Activated CD4-positive, alpha-beta T cell treated with anti-CD3 and anti-CD28 coated beads, Interleukin-2, amount 10 ng/mL, durations not matched to agents 24 days and 14 days (primary cell): ENCODE measurements at regions of chr13 and their contacts with region 1.

Region 1: DNA sequence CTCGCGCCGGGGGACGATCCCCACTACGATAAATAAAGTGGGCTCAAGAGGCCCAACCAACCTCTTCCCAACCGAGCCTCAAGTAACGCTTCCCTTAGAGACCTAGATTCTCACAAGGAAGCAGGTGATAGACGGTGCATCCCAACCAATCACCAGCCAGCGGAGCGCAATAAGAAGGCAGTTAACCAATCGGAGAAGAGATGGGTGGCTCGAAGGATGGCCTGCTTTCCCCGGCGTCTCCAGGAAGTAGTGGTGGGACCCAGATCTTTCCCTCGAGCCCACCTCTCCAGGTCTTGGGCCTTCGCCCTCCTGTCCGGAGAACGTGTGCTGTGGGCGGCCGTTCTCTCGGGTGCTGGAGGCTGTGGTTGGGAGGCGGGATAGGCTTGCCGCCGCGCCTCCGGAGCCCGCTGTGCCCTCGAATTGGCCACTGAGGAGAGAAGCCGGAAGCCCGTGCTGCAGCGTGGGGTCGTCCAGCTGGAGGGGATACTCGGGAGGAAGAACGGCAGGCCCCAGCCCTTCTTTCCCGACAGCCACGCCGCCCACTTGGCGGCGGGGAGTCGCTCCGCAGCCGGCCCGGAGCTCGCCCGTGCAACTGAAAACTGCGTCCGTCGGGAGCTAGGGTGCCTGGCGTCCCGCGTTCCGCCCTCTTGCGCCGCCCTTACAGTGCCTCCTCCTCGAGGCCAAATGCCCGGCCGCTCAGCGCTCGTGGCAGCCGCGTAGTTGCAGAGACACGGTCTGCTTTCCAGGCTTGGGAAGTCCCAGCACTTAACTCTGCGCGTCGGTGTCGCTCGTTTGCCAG is at the start of gene RNF6:
- DNase-seq: peak; percentile 95
- H3K4me3 Mint-ChIP-seq: peak within 1 kb of the TSS; percentile 97
- H3K27ac Mint-ChIP-seq: peak within 1 kb of the TSS; percentile 99
- H3K4me1 Mint-ChIP-seq: peaks cover 33% of the 10 kb centered on the region
- H3K27me3 Mint-ChIP-seq: peaks cover 2% of the 10 kb centered on the region
- total RNA-seq, gene RNF6: 45.8 and 53.4 TPM in 2 replicates

Region 2: DNA sequence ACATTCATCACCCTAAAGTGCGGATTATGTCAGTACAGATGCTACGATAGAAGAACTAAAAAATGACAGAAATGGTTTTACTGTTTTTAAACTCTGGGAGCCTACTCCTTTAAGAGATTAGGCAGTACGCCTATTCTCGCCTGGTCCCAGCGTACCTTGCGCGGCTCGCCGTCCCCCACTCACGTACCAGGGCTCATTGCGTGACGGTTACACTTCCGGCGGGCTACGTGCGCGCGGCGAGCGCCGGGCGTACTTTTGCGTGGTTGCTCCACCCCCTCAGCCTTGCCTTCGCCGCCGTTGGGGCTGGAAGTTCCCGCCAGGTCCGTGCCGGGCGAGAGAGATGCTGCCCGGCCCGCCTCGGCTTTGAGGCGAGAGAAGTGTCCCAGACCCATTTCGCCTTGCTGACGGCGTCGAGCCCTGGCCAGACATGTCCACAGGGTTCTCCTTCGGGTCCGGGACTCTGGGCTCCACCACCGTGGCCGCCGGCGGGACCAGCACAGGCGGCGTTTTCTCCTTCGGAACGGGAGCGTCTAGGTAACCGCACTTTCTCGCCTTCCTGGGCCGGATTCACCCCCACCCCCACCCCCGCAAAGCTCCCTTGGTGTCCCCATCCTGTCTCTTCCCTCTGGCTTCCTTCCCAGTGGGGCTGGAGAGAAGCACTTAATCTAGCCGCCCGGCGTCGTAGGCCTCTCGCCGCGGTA is 920.4 kb before region 1 on chr13 and contains the start of gene NUP58:
- intact Hi-C with region 1: loop called (anchors 5 kb)
- DNase-seq: peak; percentile 98
- H3K4me3 Mint-ChIP-seq: peak within 1 kb of the TSS; percentile 96
- H3K27ac Mint-ChIP-seq: peak within 1 kb of the TSS; percentile 96
- H3K4me1 Mint-ChIP-seq: peaks cover 40% of the 10 kb centered on the region
- H3K27me3 Mint-ChIP-seq: peaks cover 20% of the 10 kb centered on the region
- total RNA-seq, gene NUP58: 143 and 149 TPM in 2 replicates

Region 3: GRCh38 chr13:26168237-26168820 is 53.6 kb before region 1 on chr13:
- intact Hi-C with region 1: no loop called
- DNase-seq: no peak
- H3K4me3 Mint-ChIP-seq: no peak overlapping the region
- H3K27ac Mint-ChIP-seq: no peak overlapping the region
- H3K4me1 Mint-ChIP-seq: peaks cover 2% of the 10 kb centered on the region
- H3K27me3 Mint-ChIP-seq: no peaks in the 10 kb centered on the region

Region 4: DNA sequence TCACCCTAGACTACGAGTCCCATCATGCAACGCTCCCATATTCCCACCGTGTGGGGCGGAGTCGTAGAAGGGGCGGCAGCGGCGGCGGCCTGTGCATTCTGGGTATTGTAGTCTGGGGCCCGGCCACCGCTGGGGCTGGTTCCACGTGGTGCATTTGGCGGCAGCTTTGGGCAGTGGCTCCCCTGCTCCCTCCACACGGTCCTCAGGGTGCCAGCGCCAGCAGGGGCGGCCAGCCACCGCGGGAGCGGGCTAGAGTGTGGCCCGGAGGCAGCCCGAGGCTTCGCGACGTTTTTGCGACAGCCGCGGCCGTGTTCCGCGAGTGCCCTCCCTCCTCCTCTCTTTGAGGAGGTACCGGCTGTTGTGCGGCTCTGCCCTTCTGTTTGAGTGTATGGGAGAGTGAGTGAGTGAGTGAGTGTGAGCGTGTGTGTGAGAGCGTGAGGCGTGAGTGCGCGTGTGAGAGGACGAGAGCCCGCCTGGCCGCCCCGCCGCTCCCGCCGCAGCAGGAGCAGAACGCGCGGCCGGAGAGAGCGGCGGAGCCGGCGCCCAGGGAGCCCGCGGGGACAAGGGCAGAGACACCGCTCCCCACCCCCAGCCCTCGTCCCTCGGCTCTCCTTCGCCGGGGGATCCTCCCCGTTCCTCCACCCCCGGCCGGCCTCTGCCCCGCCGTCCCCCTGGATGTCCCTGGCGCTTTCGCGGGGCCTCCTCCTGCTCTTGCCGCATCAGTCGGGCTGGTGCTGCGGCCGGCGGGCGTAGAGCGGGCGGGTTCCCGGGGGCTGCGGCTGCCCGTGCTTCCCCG is 32.1 kb after region 1 on chr13 and contains the start of gene CDK8:
- intact Hi-C with region 1: loop called (anchors 1 kb)
- DNase-seq: peak; percentile 96
- H3K4me3 Mint-ChIP-seq: peak within 1 kb of the TSS; percentile 85
- H3K27ac Mint-ChIP-seq: peak within 1 kb of the TSS; percentile 83
- H3K4me1 Mint-ChIP-seq: peaks cover 23% of the 10 kb centered on the region
- H3K27me3 Mint-ChIP-seq: no peaks in the 10 kb centered on the region
- total RNA-seq, gene CDK8: 18.6 and 20.0 TPM in 2 replicates